HepG2 (cell line): ENCODE measurements at regions of chr19 and their contacts with region 1.

Region 1: GRCh38 chr19:36489118-36489919 is at the start of gene ZNF566:
- DNase-seq: peak; percentile 96
- ATAC-seq: peak; percentile 96
- H3K4me3 ChIP-seq: peak within 1 kb of the TSS; percentile 70 to 87 (median 84)
- H3K27ac ChIP-seq: peak within 1 kb of the TSS; percentile 91
- H3K4me1 ChIP-seq: peaks cover 22% of the 10 kb centered on the region
- H3K27me3 ChIP-seq: peaks cover 0 to 4% of the 10 kb centered on the region in 2 experiments; a peak in 1 of 5 replicates
- CTCF ChIP-seq: peak; percentile 42
- EP300 ChIP-seq: no peak
- POLR2A ChIP-seq: peak; percentile 66 to 90
- RAD21 ChIP-seq: no peak; the same call in 1 of the 2 replicates
- total RNA-seq, gene ZNF566: 13.7 and 19.0 TPM in 2 replicates

Region 2: GRCh38 chr19:36214386-36215275 is 274.7 kb before region 1 on chr19 and contains the starts of genes ZNF146 and ZNF565:
- CTCF ChIA-PET with region 1: no interaction called
- POLR2A ChIA-PET with region 1: interaction called, 33 read pairs
- in situ Hi-C with region 1: no loop called
- intact Hi-C with region 1: loop called (anchors 1 kb)
- DNase-seq: peak; percentile 98
- ATAC-seq: peak; percentile 96
- H3K4me3 ChIP-seq: peak within 1 kb of the TSS; percentile 78 to 97 (median 80)
- H3K27ac ChIP-seq: peak within 1 kb of the TSS; percentile 98
- H3K4me1 ChIP-seq: peaks cover 41% of the 10 kb centered on the region
- H3K27me3 ChIP-seq: peaks cover 0 to 3% of the 10 kb centered on the region in 2 experiments; a peak in 1 of 5 replicates
- CTCF ChIP-seq: peak; percentile 4; the same call in 1 of the 2 replicates
- EP300 ChIP-seq: no peak
- POLR2A ChIP-seq: peak; percentile 55 to 91; a peak in 3 of 4 replicates
- RAD21 ChIP-seq: no peak
- total RNA-seq, gene ZNF146: 52.7 and 93.3 TPM in 2 replicates
- total RNA-seq, gene ZNF565: 5.2 and 6.0 TPM in 2 replicates

Region 3: DNA sequence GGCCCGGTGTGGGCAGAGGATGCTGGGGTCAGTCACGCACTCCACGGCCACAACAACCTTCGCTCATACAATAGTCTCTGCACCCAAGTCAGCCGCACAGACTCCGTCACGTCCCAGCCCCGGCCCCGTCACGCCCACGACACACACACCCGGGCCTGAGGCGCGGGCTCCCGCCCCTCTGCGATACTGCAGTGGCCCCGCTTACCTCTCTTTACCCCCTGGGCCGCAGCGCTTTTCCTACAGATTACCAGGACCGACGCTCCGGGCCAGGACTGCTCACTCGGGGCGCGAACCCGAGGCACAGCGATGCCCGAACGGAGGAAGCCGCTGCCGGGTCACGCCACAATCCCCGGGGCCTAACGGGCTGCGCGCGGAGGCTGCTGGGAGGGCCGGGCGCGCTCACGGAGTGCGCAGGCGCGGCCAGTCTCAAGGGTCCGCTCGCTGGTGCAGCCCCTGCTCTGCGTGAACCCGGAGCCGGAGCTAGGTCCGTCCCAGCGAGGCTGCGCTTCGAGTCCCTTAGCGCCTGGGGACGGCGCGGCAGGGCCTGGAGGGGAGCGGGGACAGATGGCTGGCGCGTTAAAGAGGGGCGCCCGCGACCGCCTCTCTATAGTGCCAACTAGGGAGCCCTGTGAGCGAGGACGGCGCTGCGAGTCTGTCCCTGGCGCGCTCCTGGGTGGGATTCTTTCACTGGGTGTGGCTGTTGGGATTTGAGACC is 70.9 kb before region 1 on chr19 and contains the start of gene ZFP82:
- CTCF ChIA-PET with region 1: no interaction called
- POLR2A ChIA-PET with region 1: interaction called, 13 read pairs
- in situ Hi-C with region 1: no loop called
- intact Hi-C with region 1: no loop called
- DNase-seq: peak; percentile 54
- ATAC-seq: peak; percentile 95
- H3K4me3 ChIP-seq: peak within 1 kb of the TSS; percentile 56 to 72 (median 67)
- H3K27ac ChIP-seq: peak within 1 kb of the TSS; percentile 85
- H3K4me1 ChIP-seq: peaks cover 9% of the 10 kb centered on the region; the same call in 1 of the 2 replicates
- H3K27me3 ChIP-seq: no peaks in the 10 kb centered on the region
- CTCF ChIP-seq: no peak
- EP300 ChIP-seq: no peak
- POLR2A ChIP-seq: peak in 1 of 2 experiments; percentile 78; a peak in 2 of 4 replicates
- RAD21 ChIP-seq: no peak
- total RNA-seq, gene ZFP82: 4.3 and 7.1 TPM in 2 replicates

Region 4: GRCh38 chr19:36573020-36573885 is 83.9 kb after region 1 on chr19 and contains the start of gene ZNF529:
- CTCF ChIA-PET with region 1: no interaction called
- POLR2A ChIA-PET with region 1: interaction called, 15 read pairs
- in situ Hi-C with region 1: no loop called
- intact Hi-C with region 1: no loop called
- DNase-seq: peak; percentile 95
- ATAC-seq: peak; percentile 96
- H3K4me3 ChIP-seq: peak within 1 kb of the TSS; percentile 67 to 91 (median 77)
- H3K27ac ChIP-seq: peak within 1 kb of the TSS; percentile 78
- H3K4me1 ChIP-seq: peaks cover 20% of the 10 kb centered on the region
- H3K27me3 ChIP-seq: no peaks in the 10 kb centered on the region; a peak in 1 of 5 replicates
- CTCF ChIP-seq: 0 out of 2 replicates have a peak, but pooled peaks have one; percentile 17
- EP300 ChIP-seq: no peak
- POLR2A ChIP-seq: peak; percentile 89 to 93
- RAD21 ChIP-seq: peak; percentile 50
- total RNA-seq, gene ZNF529: 9.3 and 14.2 TPM in 2 replicates

Region 5: DNA sequence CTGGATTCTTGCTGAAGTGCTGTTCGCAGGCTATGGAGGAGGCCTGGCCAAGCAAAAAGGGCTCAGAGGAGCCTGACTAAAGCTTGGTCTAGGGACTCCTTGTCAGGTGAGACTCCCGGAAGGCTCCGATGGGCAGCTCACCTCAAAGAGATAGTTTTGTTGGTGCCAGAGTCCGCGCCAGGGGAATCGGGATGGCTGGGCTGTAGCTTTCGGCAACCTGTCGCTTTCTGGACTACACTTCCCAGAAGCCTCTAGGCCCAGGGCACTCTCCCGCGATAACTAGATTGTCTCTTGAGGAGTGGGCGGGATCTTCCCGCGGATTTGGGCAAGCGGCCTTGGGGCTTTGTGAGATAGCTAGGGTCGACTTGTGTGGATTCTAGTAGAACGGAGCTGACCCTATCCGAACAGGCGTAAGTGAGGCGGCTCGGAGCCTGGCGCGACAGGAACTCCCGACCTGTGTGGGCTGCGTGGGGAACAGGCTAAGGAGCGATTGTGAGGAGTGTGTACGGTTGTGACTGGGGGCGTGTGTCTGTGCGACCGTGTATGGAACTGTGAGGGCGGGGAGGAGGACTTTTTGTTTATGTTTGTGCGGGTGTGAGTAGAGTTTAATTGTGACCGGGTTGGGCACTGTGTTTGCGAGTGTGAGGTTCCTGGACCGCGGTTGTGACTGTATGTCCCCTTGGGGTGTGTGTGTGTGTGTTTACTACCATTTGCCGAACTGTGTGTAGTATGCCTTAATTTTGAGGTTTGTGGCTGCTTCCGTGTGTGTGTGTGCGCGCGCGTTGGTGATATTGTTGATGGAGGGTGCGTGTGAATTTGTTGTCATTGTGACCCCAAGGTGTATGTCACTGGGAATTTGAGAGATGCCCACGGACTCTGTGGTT is 361.5 kb after region 1 on chr19 and contains the start of gene ZNF345:
- CTCF ChIA-PET with region 1: no interaction called
- POLR2A ChIA-PET with region 1: interaction called, 13 read pairs
- in situ Hi-C with region 1: no loop called
- intact Hi-C with region 1: no loop called
- DNase-seq: peak; percentile 95
- ATAC-seq: peak; percentile 94
- H3K4me3 ChIP-seq: peak within 1 kb of the TSS; percentile 88 to 98 (median 96)
- H3K27ac ChIP-seq: peak within 1 kb of the TSS; percentile 67
- H3K4me1 ChIP-seq: peaks cover 12% of the 10 kb centered on the region
- H3K27me3 ChIP-seq: peaks cover 0 to 4% of the 10 kb centered on the region in 2 experiments; a peak in 1 of 5 replicates
- CTCF ChIP-seq: no peak
- EP300 ChIP-seq: no peak
- POLR2A ChIP-seq: peak; percentile 76 to 77; a peak in 3 of 4 replicates
- RAD21 ChIP-seq: no peak
- total RNA-seq, gene ZNF345: 2.9 and 3.0 TPM in 2 replicates